ENCODE measurements at regions of chr11 and their contacts with region 1.

Region 1: GRCh38 chr11:63838678-63839507 is at the start of gene MARK2:
- DNase-seq: peak; percentile 97 to 99 (median 98)
- ATAC-seq: peak; percentile 87
- H3K4me3 ChIP-seq: peak within 1 kb of the TSS; percentile 86 to 90
- H3K27ac ChIP-seq: peak within 1 kb of the TSS; percentile 85 to 97
- H3K4me1 ChIP-seq: peaks cover 36 to 55% of the 10 kb centered on the region in 2 donors
- H3K27me3 ChIP-seq: no peaks in the 10 kb centered on the region
- CTCF ChIP-seq: no peak
- polyA plus RNA-seq, gene MARK2: 29.0 to 40.3 (median 32.2) TPM

Region 2: GRCh38 chr11:63783925-63784592 is 54.8 kb before region 1 on chr11:
- intact Hi-C with region 1: no loop called
- DNase-seq: peak in 1 of 4 donors; percentile 40
- ATAC-seq: peak; percentile 76
- H3K4me3 ChIP-seq: no peak overlapping the region
- H3K27ac ChIP-seq: no peak overlapping the region
- H3K4me1 ChIP-seq: no peaks in the 10 kb centered on the region
- H3K27me3 ChIP-seq: no peaks in the 10 kb centered on the region
- CTCF ChIP-seq: no peak

Region 3: GRCh38 chr11:63795066-63795465 is 43.8 kb before region 1 on chr11:
- intact Hi-C with region 1: no loop called
- DNase-seq: no peak
- ATAC-seq: no peak
- H3K4me3 ChIP-seq: no peak overlapping the region
- H3K27ac ChIP-seq: no peak overlapping the region
- H3K4me1 ChIP-seq: no peaks in the 10 kb centered on the region
- H3K27me3 ChIP-seq: no peaks in the 10 kb centered on the region
- CTCF ChIP-seq: no peak

Region 4: GRCh38 chr11:63920939-63921417 is 82.1 kb after region 1 on chr11:
- intact Hi-C with region 1: loop called in 1 of 2 experiments (anchors 10 kb)
- DNase-seq: no peak
- ATAC-seq: no peak
- H3K4me3 ChIP-seq: no peak overlapping the region
- H3K27ac ChIP-seq: no peak overlapping the region
- H3K4me1 ChIP-seq: peaks cover 25 to 47% of the 10 kb centered on the region in 2 donors
- H3K27me3 ChIP-seq: peaks cover 0 to 44% of the 10 kb centered on the region in 2 donors
- CTCF ChIP-seq: peak; percentile 24 to 46

Region 5: GRCh38 chr11:63945477-63946163 is 106.7 kb after region 1 on chr11:
- intact Hi-C with region 1: loop called (anchors 5 to 10 kb)
- DNase-seq: peak in 3 of 4 donors; percentile 50 to 85 (median 70)
- ATAC-seq: peak; percentile 98
- H3K4me3 ChIP-seq: no peak overlapping the region
- H3K27ac ChIP-seq: no peak overlapping the region
- H3K4me1 ChIP-seq: peaks cover 9 to 12% of the 10 kb centered on the region in 2 donors
- H3K27me3 ChIP-seq: no peaks in the 10 kb centered on the region
- CTCF ChIP-seq: peak; percentile 64 to 87

Region 6: GRCh38 chr11:64152841-64153691 is 314.2 kb after region 1 on chr11:
- intact Hi-C with region 1: loop called in 1 of 2 experiments (anchors 10 kb)
- DNase-seq: peak in 3 of 4 donors; percentile 67 to 96 (median 69)
- ATAC-seq: peak; percentile 95
- H3K4me3 ChIP-seq: no peak overlapping the region
- H3K27ac ChIP-seq: no peak overlapping the region
- H3K4me1 ChIP-seq: peaks cover 0 to 5% of the 10 kb centered on the region in 2 donors
- H3K27me3 ChIP-seq: no peaks in the 10 kb centered on the region
- CTCF ChIP-seq: peak; percentile 100

Measured in left lung (tissue), 14 donors.